A549 (cell line): ENCODE measurements at regions of chr5 and their contacts with region 1.

Region 1: DNA sequence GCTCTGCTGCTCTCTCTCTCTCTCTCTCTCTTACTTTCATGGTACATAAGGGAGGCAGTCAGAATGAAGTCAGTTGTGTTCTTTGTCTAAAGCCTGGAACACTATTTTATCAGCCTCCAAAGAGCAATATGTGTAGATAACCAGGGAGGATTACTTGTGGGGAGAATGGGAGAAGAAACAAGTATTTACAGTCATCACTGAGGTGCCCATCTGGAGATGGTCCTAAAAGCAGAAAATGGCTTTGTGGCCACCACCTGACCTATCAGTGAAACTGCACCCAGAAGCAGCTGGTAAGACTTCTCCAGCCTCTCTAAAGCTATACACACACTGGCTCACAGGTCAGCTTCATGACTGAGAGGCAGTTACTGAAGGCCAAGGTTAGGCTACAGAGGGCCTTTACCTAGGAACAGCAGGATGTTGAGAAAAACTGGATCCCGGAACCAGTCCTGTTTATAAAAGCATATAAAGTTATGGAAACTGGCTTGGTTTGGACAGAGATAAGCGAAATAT is 75.1 kb downstream of the MRPS27 start:
- DNase-seq: peak; percentile 19 to 70
- ATAC-seq: peak; percentile 90 to 92
- H3K4me3 ChIP-seq: no peak overlapping the region
- H3K27ac ChIP-seq: 0 out of 6 replicates have a peak overlapping the region, but pooled peaks of 1 of the 2 experiments have one; percentile 12
- H3K4me1 ChIP-seq: peaks cover 52% of the 10 kb centered on the region
- CTCF ChIP-seq: peak; percentile 47; the same call in 2 of the 3 replicates
- EP300 ChIP-seq: no peak
- POLR2A ChIP-seq: no peak
- RAD21 ChIP-seq: peak; percentile 52 to 55

Region 2: DNA sequence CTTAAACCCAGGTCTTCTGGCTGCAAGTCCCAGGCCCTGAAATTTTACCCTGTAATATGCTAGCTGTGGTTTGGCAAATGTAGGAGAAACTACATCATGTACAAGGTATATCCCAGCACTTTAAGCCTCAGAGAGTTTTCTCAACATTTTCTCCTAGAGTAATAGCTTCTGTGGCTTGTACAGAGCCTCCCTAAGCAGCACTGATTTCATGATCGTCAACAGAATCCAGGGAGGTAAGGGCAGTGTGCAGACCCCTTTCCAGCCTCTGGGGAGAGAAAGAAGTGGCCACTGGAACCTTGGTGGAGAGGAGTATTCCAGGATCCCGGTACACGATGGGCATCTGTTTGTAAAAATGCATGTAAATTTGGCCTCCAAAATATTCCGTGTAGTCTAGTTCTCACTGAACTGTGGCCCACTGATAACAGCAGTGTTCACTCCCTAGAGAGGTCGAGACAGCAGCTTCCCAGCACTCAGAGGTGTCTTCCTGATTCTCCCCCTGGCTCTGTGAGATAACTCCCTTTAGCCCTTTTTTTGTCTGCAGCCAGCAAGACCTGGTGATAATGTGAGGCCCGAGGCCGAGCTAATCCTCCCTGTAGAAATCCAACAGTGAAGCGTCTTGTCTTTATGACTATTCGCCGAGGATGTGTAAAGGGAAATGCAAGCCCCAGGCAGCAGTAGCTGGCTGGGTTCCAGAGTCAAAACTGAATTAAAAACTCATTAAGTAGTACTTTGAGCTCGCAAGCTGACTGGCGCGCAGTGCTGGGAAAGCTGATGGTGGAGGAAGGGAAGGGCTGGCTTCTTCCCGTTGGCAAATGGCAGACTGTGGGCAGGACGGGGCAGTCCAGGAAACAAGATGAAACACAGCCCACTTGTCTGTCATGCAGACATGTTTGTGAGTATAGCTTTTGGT is 78.6 kb before region 1 on chr5:
- CTCF ChIA-PET with region 1: no interaction called
- POLR2A ChIA-PET with region 1: no interaction called
- DNase-seq: no peak
- ATAC-seq: peak in 1 of 2 experiments; percentile 32; a peak in 3 of 6 replicates
- H3K4me3 ChIP-seq: no peak overlapping the region
- H3K27ac ChIP-seq: no peak overlapping the region
- H3K4me1 ChIP-seq: 0 out of 3 replicates have a peak, but pooled peaks cover 2% of the 10 kb centered on the region
- CTCF ChIP-seq: no peak
- EP300 ChIP-seq: no peak
- POLR2A ChIP-seq: no peak
- RAD21 ChIP-seq: no peak

Region 3: GRCh38 chr5:72280581-72281170 is 35.8 kb after region 1 on chr5:
- CTCF ChIA-PET with region 1: interaction called, 10 read pairs
- POLR2A ChIA-PET with region 1: interaction called, 5 read pairs
- DNase-seq: peak; percentile 55 to 63
- ATAC-seq: peak; percentile 90 to 91
- H3K4me3 ChIP-seq: no peak overlapping the region
- H3K27ac ChIP-seq: peak overlapping the region; percentile 83; a peak in 5 of 6 replicates
- H3K4me1 ChIP-seq: peaks cover 34% of the 10 kb centered on the region
- CTCF ChIP-seq: peak; percentile 49
- EP300 ChIP-seq: no peak
- POLR2A ChIP-seq: no peak
- RAD21 ChIP-seq: peak; percentile 49 to 55